ENCODE measurements at regions of chr11 and their contacts with region 1.

Region 1: DNA sequence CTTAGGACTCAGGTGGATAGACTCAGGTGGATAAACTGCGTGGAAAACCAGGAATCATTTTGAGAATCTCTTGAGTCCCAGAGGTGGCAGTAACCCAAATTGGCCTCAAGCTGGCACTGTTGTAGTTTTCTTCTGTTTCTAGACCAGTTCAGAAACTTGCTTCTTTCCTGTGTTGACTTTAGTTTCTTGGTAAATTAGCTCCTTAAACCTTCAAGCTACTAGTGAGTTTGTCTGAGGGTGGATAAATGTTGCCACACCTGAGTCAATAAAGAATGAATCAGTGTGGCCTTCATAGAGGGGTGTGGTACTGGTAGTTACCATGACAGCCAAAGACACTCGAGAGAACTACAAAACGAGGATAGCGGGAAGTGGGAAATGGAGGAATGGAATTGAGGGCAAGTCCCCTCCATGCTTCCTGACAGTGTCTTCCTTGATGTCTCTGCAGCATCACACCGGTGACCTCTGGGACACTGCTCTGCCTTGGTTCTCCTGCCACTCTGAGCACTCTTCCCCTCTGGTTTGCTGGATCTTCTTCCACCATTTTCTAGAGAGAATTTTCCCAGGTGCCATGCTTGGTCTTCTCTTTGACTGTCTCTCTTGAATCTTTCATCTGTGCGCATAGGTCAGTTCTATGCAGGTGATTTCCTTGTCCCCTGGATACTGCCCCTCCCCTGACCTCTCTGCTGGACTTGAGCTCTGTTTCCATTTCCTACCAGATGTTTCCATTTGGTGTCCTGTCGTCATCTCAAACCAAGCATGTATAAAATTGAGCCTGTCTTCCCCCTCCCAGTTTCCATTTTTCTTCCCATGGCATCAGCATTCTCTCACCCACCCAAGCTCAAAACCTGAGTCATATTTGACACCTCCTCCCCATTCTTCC is 7.2 kb downstream of the POLD4 start:
- DNase-seq: no peak
- ATAC-seq: peak; percentile 82
- H3K4me3 Mint-ChIP-seq: no peak overlapping the region
- H3K27ac Mint-ChIP-seq: peak overlapping the region; percentile 41; the same call in 1 of the 2 replicates
- H3K4me1 Mint-ChIP-seq: peaks cover 9% of the 10 kb centered on the region
- H3K27me3 Mint-ChIP-seq: peaks cover 10% of the 10 kb centered on the region
- CTCF ChIP-seq: 0 out of 2 replicates have a peak, but pooled peaks have one; percentile 43

Region 2: GRCh38 chr11:67322710-67323109 is 23.4 kb before region 1 on chr11:
- CTCF ChIA-PET with region 1: interaction called, 25 read pairs
- POLR2A ChIA-PET with region 1: no interaction called
- DNase-seq: no peak
- ATAC-seq: no peak
- H3K4me3 Mint-ChIP-seq: no peak overlapping the region
- H3K27ac Mint-ChIP-seq: no peak overlapping the region
- H3K4me1 Mint-ChIP-seq: peaks cover 5% of the 10 kb centered on the region
- H3K27me3 Mint-ChIP-seq: peaks cover 26% of the 10 kb centered on the region
- CTCF ChIP-seq: no peak

Region 3: GRCh38 chr11:67373925-67374618 is 27.9 kb after region 1 on chr11:
- CTCF ChIA-PET with region 1: interaction called, 842 read pairs
- POLR2A ChIA-PET with region 1: interaction called, 5 read pairs
- DNase-seq: peak; percentile 77
- ATAC-seq: peak; percentile 6
- H3K4me3 Mint-ChIP-seq: peak overlapping the region; percentile 88
- H3K27ac Mint-ChIP-seq: no peak overlapping the region
- H3K4me1 Mint-ChIP-seq: peaks cover 46% of the 10 kb centered on the region
- H3K27me3 Mint-ChIP-seq: peaks cover 82% of the 10 kb centered on the region
- CTCF ChIP-seq: peak; percentile 32; the same call in 1 of the 2 replicates

Region 4: DNA sequence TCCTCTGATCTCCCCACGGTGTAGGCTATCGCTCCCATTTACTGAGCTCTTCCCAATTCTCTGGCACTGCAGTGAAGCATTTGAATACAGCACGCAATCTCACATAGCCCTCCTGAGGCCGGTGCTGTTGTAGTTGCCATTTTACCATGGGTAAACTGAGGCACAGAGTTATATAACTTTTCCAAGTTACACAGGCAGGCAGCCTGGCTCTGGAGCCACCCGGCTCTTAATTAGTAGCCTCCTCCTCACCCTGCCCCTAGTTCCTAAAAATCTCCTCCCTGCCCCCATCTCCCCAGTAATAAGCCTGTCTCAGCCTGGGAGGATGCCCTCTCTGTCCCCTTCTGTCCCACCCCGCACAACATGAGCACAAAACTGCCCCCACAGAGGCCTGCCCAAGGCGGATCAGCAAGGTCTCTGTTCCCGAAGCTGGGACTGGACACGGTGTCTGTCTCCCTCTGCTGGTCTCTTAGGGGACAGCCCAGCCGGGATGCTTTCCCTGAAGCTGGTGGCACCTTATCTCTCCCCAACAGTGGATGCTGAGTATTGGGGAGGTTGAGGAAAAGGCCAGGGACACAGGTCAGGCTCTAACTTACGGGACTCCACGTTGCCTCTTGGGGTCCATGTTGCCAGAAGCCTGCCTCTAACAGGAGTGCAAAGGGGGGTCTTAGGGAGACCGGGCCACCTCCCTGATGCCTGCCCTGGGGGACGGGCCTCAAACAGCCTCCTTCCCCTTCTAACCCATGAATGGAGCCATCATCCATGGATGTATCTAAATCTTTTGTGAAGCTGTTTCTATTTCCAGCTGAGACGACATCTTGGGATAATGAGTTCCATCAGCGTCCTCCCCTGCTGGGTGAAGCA is 36.3 kb after region 1 on chr11:
- CTCF ChIA-PET with region 1: interaction called, 842 read pairs
- POLR2A ChIA-PET with region 1: no interaction called
- DNase-seq: peak; percentile 90
- ATAC-seq: peak; percentile 85
- H3K4me3 Mint-ChIP-seq: no peak overlapping the region
- H3K27ac Mint-ChIP-seq: no peak overlapping the region; the same call in 1 of the 2 replicates
- H3K4me1 Mint-ChIP-seq: peaks cover 17% of the 10 kb centered on the region
- H3K27me3 Mint-ChIP-seq: peaks cover 52% of the 10 kb centered on the region
- CTCF ChIP-seq: peak; percentile 90

Region 5: GRCh38 chr11:67391304-67392132 is 45.4 kb after region 1 on chr11 and contains the start of gene RAD9A:
- CTCF ChIA-PET with region 1: interaction called, 842 read pairs
- POLR2A ChIA-PET with region 1: no interaction called
- DNase-seq: peak; percentile 93
- ATAC-seq: peak; percentile 52
- H3K4me3 Mint-ChIP-seq: peak within 1 kb of the TSS; percentile 75
- H3K27ac Mint-ChIP-seq: peak within 1 kb of the TSS; percentile 85
- H3K4me1 Mint-ChIP-seq: peaks cover 35% of the 10 kb centered on the region
- H3K27me3 Mint-ChIP-seq: no peaks in the 10 kb centered on the region
- CTCF ChIP-seq: no peak
- total RNA-seq, gene RAD9A: 25.7 to 45.5 TPM (median 26.7 TPM) in 3 replicates